Natural killer cell (primary cell): ENCODE measurements at regions of chrX and their contacts with region 1.

Region 1: DNA sequence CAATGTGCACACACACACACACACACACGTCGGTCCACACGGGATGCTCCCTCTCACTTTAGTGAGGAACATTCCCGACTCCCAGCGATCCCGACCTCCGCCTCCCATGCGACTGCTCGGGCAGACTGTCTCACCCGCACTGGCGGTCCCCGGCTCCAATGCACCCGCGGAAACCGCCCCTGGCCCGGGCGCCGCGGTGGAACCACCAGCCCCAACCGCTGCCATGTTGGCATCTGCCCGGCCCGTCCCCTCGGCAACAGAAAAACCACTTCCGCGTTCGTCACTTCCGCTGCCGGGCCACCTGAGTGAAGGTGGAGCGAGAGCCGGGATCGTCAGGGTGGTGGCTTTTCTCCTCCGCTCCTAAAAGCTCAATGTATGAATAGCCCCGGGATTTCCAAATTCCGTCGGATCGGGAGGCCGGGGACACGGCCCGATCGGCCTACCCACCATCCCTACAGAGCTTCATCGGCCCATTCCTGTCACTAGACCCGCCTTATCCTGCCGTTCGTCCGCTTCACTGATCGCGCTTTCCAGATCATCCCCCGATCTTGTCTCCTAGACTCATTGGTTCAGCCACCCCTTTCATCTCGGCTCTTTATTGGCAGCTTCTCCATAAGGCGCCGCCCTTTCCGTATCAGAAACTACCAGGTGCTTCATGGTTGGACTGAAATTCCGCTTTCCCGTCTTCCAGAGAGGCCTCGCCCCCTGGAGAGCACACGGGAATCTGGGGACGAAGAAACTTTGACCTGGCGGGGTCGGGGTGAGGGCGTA is at the start of gene SLC35A2:
- DNase-seq: peak; percentile 84 to 92
- ATAC-seq: peak; percentile 75 to 87 (median 83)
- H3K4me3 ChIP-seq: peak within 1 kb of the TSS; percentile 68
- H3K4me3 Mint-ChIP-seq: peak within 1 kb of the TSS; percentile 92
- H3K27ac ChIP-seq: peak within 1 kb of the TSS; percentile 86
- H3K27ac Mint-ChIP-seq: peak within 1 kb of the TSS; percentile 94 to 97
- H3K4me1 ChIP-seq: peaks cover 47% of the 10 kb centered on the region
- H3K4me1 Mint-ChIP-seq: peaks cover 32 to 35% of the 10 kb centered on the region in 2 donors
- H3K27me3 ChIP-seq: no peaks in the 10 kb centered on the region
- H3K27me3 Mint-ChIP-seq: peaks cover 0 to 13% of the 10 kb centered on the region in 2 donors
- CTCF ChIP-seq: no peak
- total RNA-seq, gene SLC35A2: 16.5 to 30.1 (median 18.3) TPM

Region 2: DNA sequence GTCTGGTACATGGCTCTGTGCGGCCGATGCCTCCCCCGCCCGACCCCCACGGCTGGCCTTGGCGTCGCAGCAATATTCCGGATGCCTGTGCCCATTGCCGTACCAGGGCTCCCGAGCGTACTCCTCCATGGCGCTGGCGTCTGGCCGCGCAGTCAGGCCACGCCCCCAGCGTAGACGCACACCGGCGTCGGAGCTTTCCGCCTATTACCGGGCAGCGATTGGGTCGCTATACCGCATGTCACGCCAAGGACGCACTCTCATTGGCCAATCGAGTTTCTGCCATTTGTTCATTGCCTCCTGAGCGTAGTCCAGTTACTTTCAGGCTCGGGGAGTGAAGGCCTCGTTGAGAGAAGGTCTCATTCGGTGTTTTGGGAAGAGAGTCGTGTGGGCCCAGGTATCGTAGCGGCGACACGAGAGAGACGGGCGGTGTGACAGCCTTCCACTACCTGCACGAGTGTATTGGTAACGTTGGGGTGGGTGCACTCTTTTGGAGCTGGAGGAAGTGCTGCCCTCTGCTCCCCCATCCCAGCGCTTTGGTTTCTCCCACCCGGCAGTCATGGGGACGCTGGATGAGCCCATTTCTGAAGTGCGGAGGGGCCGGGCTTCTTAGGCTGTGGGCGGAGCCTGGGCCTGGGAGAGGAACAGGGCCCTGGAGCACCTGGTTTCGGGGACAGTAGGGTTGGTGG is 13.8 kb before region 1 on chrX and contains the starts of genes PQBP1 and TIMM17B:
- intact Hi-C with region 1: loop called (anchors 2 kb)
- DNase-seq: peak; percentile 79 to 95
- ATAC-seq: peak; percentile 85 to 96 (median 87)
- H3K4me3 ChIP-seq: peak within 1 kb of the TSS; percentile 99
- H3K4me3 Mint-ChIP-seq: peak within 1 kb of the TSS; percentile 90
- H3K27ac ChIP-seq: peak within 1 kb of the TSS; percentile 100
- H3K27ac Mint-ChIP-seq: peak within 1 kb of the TSS; percentile 92 to 97
- H3K4me1 ChIP-seq: peaks cover 27% of the 10 kb centered on the region
- H3K4me1 Mint-ChIP-seq: peaks cover 6 to 23% of the 10 kb centered on the region in 2 donors
- H3K27me3 ChIP-seq: no peaks in the 10 kb centered on the region
- H3K27me3 Mint-ChIP-seq: no peaks in the 10 kb centered on the region
- CTCF ChIP-seq: no peak
- total RNA-seq, gene PQBP1: 57.2 to 62.0 (median 59.1) TPM
- total RNA-seq, gene TIMM17B: 40.3 to 45.6 (median 44.5) TPM